ENCODE measurements at regions of chr11 and their contacts with region 1.

Region 1: DNA sequence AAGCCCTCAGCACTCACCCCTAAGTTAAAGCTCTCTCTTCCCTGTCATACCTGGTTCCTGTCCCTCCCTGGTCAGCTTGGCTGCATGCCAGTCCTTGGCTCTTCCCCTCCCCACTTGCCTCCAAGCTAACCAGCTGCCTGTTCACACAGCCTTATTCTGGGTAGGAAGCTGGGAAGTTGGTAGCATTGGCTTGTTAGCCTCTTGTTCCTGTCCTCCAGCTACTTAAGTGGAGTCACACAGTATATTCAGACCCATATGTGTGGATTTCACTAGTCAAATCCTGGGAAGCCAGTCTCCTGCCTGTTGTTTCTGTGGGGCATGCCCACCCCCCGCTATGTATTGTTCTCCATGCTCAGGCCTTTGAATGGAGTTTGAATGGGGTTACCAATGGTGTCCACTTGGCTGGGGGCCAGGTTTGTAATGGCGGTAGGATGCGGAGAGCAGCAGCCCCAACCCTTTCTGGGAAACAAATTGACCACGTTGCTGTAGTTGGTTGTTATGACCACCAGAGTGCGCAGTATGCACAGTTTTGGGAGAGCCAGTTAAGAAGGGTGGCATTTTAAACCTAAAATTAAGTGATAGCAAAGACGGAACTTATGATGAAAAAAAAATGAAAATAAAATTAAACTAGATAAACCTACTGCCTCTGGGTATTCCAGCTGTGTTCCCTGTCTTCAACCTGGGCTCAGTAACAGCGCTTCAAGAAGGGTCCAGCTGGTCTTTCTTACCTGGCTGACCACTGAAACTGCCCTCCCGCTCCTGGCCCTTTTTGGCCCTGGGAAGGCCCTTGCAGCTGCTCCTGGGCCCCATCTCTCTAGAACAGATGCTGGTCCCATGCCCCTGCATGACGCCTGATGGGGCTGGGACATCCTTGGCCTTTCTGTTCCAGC is 10.7 kb upstream of the RPS3 start:
- DNase-seq: peak; percentile 76 to 88
- ATAC-seq: peak; percentile 90
- H3K4me3 ChIP-seq: no peak overlapping the region
- H3K27ac ChIP-seq: no peak overlapping the region
- H3K4me1 ChIP-seq: no peaks in the 10 kb centered on the region
- H3K27me3 ChIP-seq: no peaks in the 10 kb centered on the region

Region 2: DNA sequence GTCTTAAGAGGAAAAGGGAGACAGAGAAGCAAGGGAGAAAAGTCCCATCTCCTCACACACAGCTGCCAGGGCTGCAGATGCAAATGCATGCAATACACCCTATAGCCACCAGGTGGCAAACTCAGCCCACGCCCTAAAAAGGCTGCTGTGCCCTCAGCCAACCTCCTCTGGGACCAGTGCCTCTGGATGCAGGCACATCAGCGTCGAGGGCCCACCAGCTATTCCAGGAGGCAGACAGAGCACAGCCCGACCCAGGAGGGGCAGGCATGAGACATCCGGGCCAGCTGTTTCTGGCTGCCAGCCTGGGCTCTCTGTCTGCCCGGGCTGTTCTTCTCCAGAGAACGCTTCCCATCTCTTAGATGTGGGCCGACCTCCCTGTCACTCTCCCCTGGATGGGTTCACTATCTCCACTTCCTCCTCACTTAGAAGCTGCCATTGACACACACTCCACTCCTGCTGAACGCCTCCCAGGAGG is 108.4 kb before region 1 on chr11:
- intact Hi-C with region 1: loop called (anchors 1 to 5 kb)
- DNase-seq: peak; percentile 77 to 88
- ATAC-seq: peak; percentile 90
- H3K4me3 ChIP-seq: no peak overlapping the region
- H3K27ac ChIP-seq: no peak overlapping the region
- H3K4me1 ChIP-seq: no peaks in the 10 kb centered on the region
- H3K27me3 ChIP-seq: no peaks in the 10 kb centered on the region

Region 3: DNA sequence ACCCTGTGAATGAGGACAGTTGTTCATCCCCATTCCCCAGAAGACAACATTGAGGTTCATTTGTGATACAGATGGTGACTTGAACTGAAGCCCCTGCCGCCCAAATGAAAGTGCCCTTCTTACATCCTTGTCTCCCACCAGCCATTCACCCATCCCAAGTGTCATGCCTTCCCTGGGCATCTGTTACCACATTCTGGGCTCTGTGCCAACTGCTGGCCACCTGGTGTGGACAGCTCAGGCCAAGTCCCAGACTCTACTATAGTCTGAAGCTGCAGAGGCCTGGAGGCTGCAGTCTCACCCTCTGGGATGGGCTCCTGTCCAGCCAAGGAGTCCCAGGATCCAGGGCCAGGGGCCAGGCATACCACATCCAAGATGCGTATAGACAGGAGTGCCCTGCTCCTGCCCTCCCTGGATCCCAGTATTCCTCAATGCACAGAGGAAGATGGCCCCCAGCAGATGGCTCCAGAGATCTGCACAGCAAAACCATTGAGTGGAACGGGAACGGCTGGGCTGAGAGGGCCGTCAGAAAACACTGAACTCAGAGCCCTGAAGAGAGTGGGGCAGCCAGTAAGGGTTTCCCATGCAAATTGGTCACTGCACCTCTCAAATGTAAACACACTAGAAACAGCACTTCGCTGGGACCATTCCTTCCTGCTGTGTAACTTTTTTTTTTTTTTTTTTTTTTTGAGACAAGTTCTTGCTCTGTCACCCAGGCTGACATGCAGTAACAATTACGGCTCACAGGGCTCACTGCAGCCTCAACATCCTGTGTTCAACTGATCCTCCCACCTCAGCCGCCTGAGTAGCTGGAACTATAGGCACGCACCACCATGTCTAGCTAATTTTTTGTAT is 60.0 kb before region 1 on chr11:
- intact Hi-C with region 1: loop called (anchors 5 to 10 kb)
- DNase-seq: peak; percentile 74 to 85
- ATAC-seq: peak; percentile 85
- H3K4me3 ChIP-seq: no peak overlapping the region
- H3K27ac ChIP-seq: no peak overlapping the region
- H3K4me1 ChIP-seq: no peaks in the 10 kb centered on the region
- H3K27me3 ChIP-seq: no peaks in the 10 kb centered on the region

Region 4: GRCh38 chr11:75733431-75734107 is 344.9 kb after region 1 on chr11:
- intact Hi-C with region 1: no loop called
- DNase-seq: peak in 1 of 2 donors; percentile 55
- ATAC-seq: peak; percentile 63
- H3K4me3 ChIP-seq: no peak overlapping the region
- H3K27ac ChIP-seq: no peak overlapping the region
- H3K4me1 ChIP-seq: no peaks in the 10 kb centered on the region
- H3K27me3 ChIP-seq: no peaks in the 10 kb centered on the region

Measured in aorta (tissue), 5 donors.